ENCODE measurements at regions of chr9 and their contacts with region 1.

Region 1: DNA sequence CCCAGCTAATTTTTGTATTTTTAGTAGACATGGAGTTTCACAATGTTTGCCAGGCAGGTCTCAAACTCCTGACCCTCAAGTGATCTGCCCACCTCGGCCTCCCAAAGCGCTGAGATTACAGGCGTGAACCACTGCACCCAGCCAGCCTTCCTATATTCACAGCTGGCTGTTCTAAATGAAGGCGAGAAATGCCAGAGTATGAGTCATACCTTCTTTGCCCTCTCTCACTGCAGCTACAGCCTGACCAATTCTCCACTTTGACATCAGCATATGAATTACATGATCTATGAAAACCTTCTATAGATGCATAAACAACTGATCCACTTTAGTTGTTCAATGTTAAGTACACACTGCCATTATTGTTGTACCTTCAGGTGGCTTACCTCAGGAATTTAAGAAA is 14.5 kb downstream of the APTX start:
- DNase-seq: no peak
- ATAC-seq: no peak
- H3K4me3 ChIP-seq: no peak overlapping the region
- H3K27ac ChIP-seq: no peak overlapping the region
- H3K4me1 ChIP-seq: no peaks in the 10 kb centered on the region
- H3K27me3 ChIP-seq: no peaks in the 10 kb centered on the region
- CTCF ChIP-seq: no peak

Region 2: DNA sequence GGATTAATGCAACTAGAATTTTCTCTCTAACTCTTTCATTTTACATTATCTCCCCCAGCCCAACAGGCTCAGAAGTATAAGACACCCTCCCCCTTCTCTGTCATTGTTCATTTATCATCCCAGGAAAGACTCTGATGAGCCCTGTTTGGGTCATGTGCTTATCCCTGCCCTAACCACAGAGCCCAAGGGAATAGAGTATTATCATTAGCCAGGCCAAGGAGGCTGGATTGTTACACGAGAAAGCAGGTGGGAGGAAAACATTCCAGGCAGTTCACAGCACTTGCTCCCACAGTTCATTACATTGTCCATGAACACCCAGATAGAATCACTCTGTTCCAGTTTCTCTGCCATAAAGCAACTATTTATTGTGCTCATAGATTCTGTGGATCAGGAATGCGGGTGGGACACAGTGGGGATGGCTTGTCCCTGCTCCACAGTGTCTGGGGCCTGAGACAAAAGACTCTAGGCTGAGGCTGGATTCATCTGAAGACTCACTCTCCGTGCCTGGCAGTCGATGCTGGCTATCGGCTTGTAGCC is 263.1 kb before region 1 on chr9:
- CTCF ChIA-PET with region 1: no interaction called
- POLR2A ChIA-PET with region 1: interaction called, 10 read pairs
- in situ Hi-C with region 1: no loop called
- intact Hi-C with region 1: no loop called
- DNase-seq: no peak
- ATAC-seq: no peak
- H3K4me3 ChIP-seq: no peak overlapping the region
- H3K27ac ChIP-seq: no peak overlapping the region
- H3K4me1 ChIP-seq: no peaks in the 10 kb centered on the region
- H3K27me3 ChIP-seq: no peaks in the 10 kb centered on the region
- CTCF ChIP-seq: no peak